ENCODE measurements at regions of chr5 and their contacts with region 1.

Region 1: DNA sequence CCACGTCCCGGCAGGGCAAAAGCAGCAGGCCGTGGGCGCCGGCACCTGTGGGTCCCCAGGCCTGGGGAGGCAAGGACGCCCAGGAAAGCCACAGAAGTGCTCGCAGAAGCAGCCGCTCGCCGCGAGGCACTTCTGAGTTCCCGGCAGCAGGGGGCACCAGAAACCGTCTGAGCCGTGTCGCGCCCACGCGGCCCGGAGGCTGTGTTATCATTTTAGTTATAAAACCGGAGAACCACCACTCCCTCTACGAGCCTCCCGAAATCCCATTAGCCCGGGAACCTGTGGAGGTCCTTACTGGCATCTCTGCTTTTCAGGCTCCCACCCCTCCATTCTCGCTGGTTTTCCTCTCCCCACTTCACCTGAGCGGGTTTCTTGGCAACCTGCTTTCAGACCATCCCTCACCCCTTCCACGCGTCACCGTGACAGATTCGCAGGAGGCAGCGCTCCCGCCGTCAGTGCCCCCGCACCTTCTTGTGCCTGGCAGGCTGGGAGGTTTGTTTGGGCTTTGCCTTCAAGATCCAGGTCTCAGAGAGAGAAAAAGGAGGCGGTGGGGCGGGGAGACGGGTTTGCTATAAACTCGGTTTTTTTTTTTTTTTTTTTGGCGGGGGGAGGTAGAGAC is 2.3 kb downstream of the GDNF start:
- DNase-seq: peak; percentile 83
- ATAC-seq: peak; percentile 77

Region 2: GRCh38 chr5:37900692-37901091 is 63.2 kb after region 1 on chr5:
- intact Hi-C with region 1: loop called (anchors 5 kb)
- DNase-seq: peak; percentile 87
- ATAC-seq: peak; percentile 96

Region 3: GRCh38 chr5:38112938-38113337 is 275.4 kb after region 1 on chr5:
- intact Hi-C with region 1: no loop called
- DNase-seq: no peak
- ATAC-seq: peak; percentile 88

Region 4: DNA sequence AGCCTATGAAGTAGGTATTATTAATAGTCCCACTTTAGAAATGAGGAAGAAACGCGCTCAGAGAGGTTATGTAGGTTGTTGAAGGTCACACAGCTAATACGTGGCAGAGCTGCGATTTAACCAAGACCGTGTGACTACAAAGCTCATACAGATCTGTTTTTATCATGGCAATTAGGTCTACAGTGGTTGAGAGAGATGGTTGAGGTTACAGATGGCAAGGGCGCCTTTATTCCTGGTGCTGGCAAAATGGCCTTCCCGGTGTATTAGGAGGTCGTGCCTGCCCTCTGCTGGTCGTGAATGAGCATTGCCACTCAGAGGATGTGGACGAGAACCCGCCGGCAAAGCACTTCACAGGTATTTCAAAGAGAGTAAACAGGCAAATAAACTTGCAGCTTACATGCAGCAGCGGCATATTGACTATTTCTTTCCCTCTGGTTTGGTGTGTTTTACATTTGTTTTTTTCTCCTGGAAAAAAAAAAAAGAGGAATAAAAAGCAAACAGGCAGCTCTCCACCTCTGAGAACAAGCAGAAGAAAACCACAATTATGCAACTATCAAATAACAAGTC is 355.6 kb after region 1 on chr5:
- intact Hi-C with region 1: loop called (anchors 1 kb)
- DNase-seq: peak; percentile 78
- ATAC-seq: peak; percentile 73

Measured in Right ventricle myocardium inferior (tissue), 1 donor.